Left colon (tissue), 2 donors: ENCODE measurements at regions of chr2 and their contacts with region 1.

Region 1: GRCh38 chr2:222982010-222982908 is 69.7 kb upstream of the KCNE4 start:
- DNase-seq: peak in 1 of 2 donors; percentile 24
- ATAC-seq: peak; percentile 73

Region 2: GRCh38 chr2:223101340-223102039 is 119.2 kb after region 1 on chr2:
- intact Hi-C with region 1: loop called in 1 of 2 experiments (anchors 5 kb)
- DNase-seq: peak; percentile 33
- ATAC-seq: peak; percentile 81